Activated naive CD4-positive, alpha-beta T cell treated with anti-CD3 and anti-CD28 coated beads for 36 hours (primary cell): ENCODE measurements at regions of chr2 and their contacts with region 1.

Region 1: DNA sequence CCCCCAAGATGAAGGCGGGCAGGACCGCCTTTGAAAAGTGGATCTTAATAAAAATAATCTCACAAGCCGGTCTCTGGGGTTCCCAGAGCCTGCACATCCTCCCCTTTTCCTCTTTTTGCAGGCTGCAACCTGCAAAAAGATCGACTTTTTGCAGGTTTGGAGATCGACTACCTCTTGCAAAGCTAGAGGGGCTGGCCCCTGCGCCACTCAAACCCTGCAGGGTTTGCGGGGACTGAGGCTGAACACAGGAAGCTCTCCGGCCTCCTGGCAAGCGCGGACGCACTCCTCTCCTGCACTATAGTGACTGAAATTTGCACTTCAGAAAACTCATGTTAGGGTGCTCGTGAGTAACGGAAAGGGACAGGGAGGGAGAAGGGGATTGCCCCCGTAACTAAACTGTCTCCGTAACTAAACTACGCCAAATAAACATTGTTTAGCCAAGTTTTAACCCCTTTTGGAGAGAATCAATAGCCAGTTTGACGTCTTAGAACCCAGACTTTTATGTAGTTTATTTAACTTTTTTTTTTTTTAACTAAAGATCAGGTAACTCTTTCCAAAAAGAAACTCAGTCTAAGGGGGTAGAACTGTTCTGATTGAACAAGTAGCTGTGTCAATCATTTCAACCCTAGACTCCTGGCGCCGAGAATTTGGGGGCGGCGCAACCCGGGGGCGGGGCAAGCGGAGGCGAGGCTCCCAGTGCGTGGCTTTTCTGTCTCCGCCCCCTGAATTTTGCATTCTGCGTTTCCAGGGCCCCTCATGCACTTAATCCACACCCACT is 2.5 kb downstream of the IGFBP5 start:
- DNase-seq: peak; percentile 77
- H3K4me3 Mint-ChIP-seq: peak overlapping the region; percentile 74
- H3K27ac Mint-ChIP-seq: peak overlapping the region; percentile 43
- H3K4me1 Mint-ChIP-seq: peaks cover 29% of the 10 kb centered on the region
- H3K27me3 Mint-ChIP-seq: peaks cover 69% of the 10 kb centered on the region

Region 2: DNA sequence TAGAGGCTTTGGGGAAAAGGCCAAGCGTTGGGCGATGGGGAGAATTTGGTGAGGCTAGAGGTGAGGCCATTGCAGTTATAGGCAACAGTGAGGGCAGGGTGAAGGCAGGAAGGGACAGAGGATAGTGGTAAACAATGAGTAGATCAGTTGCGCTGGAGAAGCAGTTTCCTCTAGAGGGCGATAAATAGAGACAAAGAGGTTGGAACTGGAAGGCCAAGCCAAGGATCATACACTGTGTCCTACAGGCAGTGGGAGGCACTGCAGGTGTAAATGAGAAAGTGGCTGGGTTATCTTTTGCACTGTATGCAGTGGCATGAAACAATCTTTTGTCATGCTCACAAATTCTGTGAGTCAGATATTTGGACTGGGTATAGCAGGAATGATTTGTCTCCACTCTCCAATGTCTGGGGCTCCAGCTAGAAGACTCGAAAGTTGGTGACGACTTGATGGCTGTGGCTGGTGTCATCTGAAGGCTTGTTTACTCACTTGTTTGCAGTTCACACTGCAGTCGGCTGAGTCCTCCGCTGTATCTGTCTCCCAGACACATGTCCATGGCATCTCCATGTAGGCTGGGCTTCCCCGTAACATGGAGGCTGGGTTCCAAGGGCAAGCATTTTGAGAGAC is 84.9 kb after region 1 on chr2:
- CTCF ChIA-PET with region 1: no interaction called
- intact Hi-C with region 1: loop called (anchors 2 kb)
- DNase-seq: peak; percentile 61
- H3K4me3 Mint-ChIP-seq: no peak overlapping the region
- H3K27ac Mint-ChIP-seq: no peak overlapping the region
- H3K4me1 Mint-ChIP-seq: no peaks in the 10 kb centered on the region
- H3K27me3 Mint-ChIP-seq: peaks cover 2% of the 10 kb centered on the region

Region 3: GRCh38 chr2:216849987-216850386 is 157.2 kb after region 1 on chr2:
- CTCF ChIA-PET with region 1: no interaction called
- intact Hi-C with region 1: loop called (anchors 5 kb)
- DNase-seq: peak; percentile 53
- H3K4me3 Mint-ChIP-seq: no peak overlapping the region
- H3K27ac Mint-ChIP-seq: no peak overlapping the region
- H3K4me1 Mint-ChIP-seq: peaks cover 15% of the 10 kb centered on the region
- H3K27me3 Mint-ChIP-seq: no peaks in the 10 kb centered on the region

Region 4: DNA sequence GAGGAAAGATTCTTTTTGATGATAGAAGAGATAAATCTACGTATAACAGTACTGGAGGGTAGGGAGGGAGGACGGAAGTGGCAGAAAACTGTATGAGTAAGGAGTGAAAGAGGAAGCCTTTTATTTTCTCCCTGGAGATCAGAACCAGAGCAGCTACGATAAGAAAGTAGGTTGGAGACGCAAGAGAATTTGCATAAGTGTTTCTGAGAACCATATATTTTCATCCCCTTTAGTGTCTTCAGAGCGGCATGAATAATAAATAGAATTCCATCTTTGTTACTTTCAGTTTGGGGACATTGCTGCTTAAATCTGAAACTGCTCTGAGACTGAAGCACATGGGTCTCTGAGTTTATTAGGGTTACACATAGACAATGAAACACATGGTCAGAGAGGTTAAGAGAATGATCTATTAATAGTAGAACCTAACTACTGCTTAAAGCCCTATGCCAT is 397.2 kb after region 1 on chr2:
- CTCF ChIA-PET with region 1: no interaction called
- intact Hi-C with region 1: loop called (anchors 2 kb)
- DNase-seq: peak; percentile 46
- H3K4me3 Mint-ChIP-seq: no peak overlapping the region
- H3K27ac Mint-ChIP-seq: no peak overlapping the region
- H3K4me1 Mint-ChIP-seq: peaks cover 25% of the 10 kb centered on the region
- H3K27me3 Mint-ChIP-seq: peaks cover 16% of the 10 kb centered on the region

Region 5: DNA sequence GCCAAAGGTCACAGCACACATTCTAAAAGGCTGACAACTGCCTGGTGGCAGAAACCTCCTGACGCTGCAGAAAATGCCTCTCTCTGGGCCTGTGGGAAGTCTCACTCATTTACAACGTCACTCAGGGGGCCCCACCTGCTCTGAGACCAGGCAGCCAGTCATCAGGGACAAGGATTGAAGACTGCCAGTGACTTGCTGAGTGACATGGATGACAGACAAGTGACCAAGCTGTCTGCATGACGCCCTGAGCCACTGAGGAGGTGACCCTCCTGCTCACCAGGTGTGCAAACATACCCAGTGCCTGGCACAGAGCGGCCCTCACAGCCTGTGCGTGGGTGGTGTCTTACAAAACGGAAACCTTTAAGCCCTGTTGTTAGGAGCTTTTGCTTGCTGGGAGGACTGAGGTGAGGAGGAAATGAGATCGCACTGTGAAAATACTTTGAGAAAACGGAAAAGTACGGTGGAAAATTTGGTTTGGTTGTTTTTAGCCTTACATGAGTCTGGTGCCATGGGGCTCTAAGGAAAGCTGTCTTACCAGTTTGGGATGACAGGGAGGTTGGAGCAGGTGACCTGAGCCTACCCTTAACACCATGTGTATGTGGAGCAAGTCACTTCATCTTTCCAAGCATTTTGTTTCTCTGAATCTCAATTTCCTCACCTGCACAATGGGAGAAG is 917.7 kb after region 1 on chr2:
- CTCF ChIA-PET with region 1: no interaction called
- intact Hi-C with region 1: loop called (anchors 1 kb)
- DNase-seq: peak; percentile 89
- H3K4me3 Mint-ChIP-seq: peak overlapping the region; percentile 25
- H3K27ac Mint-ChIP-seq: peak overlapping the region; percentile 84
- H3K4me1 Mint-ChIP-seq: peaks cover 54% of the 10 kb centered on the region
- H3K27me3 Mint-ChIP-seq: no peaks in the 10 kb centered on the region